ENCODE measurements at regions of chr16 and their contacts with region 1.

Region 1: GRCh38 chr16:72389791-72390190 is 217.8 kb upstream of the PMFBP1 start:
- DNase-seq: no peak
- H3K4me3 ChIP-seq: no peak overlapping the region
- H3K27ac ChIP-seq: no peak overlapping the region
- H3K4me1 ChIP-seq: no peaks in the 10 kb centered on the region
- H3K27me3 ChIP-seq: no peaks in the 10 kb centered on the region
- CTCF ChIP-seq: no peak
- POLR2A ChIP-seq: no peak

Region 2: GRCh38 chr16:72467157-72467759 is 77.5 kb after region 1 on chr16:
- intact Hi-C with region 1: no loop called
- DNase-seq: no peak
- H3K4me3 ChIP-seq: no peak overlapping the region
- H3K27ac ChIP-seq: no peak overlapping the region
- H3K4me1 ChIP-seq: no peaks in the 10 kb centered on the region
- H3K27me3 ChIP-seq: no peaks in the 10 kb centered on the region
- CTCF ChIP-seq: no peak
- POLR2A ChIP-seq: no peak

Region 3: GRCh38 chr16:73692861-73693260 is 1303.1 kb after region 1 on chr16:
- intact Hi-C with region 1: loop called (anchors 5 kb)
- DNase-seq: no peak
- H3K4me3 ChIP-seq: no peak overlapping the region
- H3K27ac ChIP-seq: no peak overlapping the region
- H3K4me1 ChIP-seq: no peaks in the 10 kb centered on the region
- H3K27me3 ChIP-seq: no peaks in the 10 kb centered on the region
- CTCF ChIP-seq: no peak
- POLR2A ChIP-seq: no peak